Activated B cell treated with CpG ODN at 0.5 μM for 24 hours (primary cell): ENCODE measurements at regions of chr17 and their contacts with region 1.

Region 1: DNA sequence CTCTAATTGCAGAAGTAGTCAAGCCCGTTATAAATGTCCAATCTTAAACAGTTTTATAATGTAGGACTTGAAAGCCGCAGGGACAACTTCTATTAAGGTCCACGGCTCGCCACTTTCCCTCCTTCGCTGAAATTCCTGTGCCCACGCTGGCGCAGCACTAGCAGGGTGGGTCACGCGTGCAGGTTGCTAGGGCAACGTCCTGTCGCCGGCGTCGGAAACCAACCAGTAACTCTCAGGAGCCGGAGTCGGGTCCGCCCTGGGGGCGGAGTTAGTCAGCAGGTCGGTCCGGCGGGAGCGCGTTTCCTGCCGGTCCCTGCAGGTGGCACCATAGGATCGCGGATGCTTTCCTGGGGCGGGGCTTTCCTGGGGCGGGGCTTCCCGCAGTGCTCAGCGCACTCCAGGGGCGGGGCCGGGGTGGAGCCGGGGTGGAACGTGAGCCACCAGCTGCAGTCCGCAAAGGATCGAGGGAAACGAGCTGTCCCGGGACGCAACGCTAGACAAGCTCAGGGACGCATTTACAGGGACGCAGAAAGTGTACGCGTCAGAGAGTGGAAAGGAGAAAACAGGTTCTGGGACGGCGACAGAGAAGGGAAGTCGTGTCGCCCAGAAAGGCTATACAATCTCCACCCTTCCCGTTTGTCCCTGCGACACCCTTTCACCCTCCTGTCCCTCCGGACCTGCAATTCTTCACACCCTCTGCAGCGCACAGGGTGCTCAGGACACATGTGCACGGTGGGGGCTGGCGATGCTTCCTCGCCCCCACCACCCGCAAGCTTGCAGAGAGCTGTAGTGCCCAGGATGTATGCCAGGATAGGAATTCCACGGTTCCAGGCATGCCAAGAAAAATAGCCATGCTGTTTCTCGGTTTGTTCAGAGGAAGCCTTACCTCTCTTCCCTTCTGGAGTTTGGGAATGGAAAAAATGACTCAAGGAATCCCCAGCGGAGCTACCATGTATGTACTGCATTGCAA is 12.4 kb downstream of the COPZ2 start:
- DNase-seq: peak; percentile 91
- ATAC-seq: peak; percentile 89
- H3K4me3 Mint-ChIP-seq: peak overlapping the region; percentile 89
- H3K27ac Mint-ChIP-seq: peak overlapping the region; percentile 91
- H3K4me1 Mint-ChIP-seq: peaks cover 35% of the 10 kb centered on the region
- H3K27me3 Mint-ChIP-seq: peaks cover 9% of the 10 kb centered on the region
- CTCF ChIP-seq: no peak

Region 2: GRCh38 chr17:47895856-47896671 is 129.2 kb before region 1 on chr17 and contains the start of gene SP2:
- CTCF ChIA-PET with region 1: no interaction called
- POLR2A ChIA-PET with region 1: no interaction called
- intact Hi-C with region 1: loop called (anchors 1 kb)
- DNase-seq: peak; percentile 97
- ATAC-seq: peak; percentile 88
- H3K4me3 Mint-ChIP-seq: peak within 1 kb of the TSS; percentile 98
- H3K27ac Mint-ChIP-seq: peak within 1 kb of the TSS; percentile 99
- H3K4me1 Mint-ChIP-seq: peaks cover 44% of the 10 kb centered on the region
- H3K27me3 Mint-ChIP-seq: no peaks in the 10 kb centered on the region
- CTCF ChIP-seq: no peak
- total RNA-seq, gene SP2: 26.5 and 28.5 TPM in 2 replicates

Region 3: DNA sequence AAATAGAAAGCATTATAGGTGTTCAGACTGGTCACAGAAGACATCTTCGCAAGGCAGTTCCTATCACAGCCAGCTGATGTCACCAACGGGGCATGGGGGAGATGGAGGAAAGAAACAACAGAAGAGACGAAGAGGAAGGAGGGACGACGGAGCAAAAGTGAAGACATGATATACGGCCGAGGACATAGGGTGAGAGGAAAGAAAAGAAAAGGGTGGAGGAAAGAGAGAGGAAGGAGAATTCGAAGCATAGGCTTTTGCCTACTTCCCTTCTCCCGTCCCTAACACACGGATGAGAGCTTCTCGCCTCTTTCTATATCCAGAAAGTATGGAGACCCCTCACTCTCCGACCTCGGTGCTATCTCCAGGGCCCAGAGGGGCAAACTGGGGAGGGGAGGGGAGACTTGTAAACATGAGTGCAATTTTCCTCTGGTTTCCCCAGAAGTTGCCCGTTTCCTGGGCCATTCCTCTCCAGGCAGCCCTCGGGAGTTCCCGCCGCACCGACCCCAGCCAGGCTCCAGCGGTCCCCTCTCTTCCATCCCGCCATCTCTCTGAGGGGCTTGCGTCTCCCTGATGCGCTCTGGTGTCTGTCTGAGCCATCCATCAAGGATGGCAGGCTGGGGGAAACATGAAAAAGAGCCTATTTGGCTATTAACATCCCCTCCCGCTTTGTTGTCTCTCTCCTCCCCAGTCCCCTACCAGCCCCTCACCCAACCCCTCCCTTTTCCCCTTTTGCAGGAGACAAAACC is 13.6 kb before region 1 on chr17:
- CTCF ChIA-PET with region 1: interaction called, 10 read pairs
- POLR2A ChIA-PET with region 1: interaction called, 3 read pairs
- intact Hi-C with region 1: loop called (anchors 1 kb)
- DNase-seq: no peak
- ATAC-seq: peak; percentile 69
- H3K4me3 Mint-ChIP-seq: peak overlapping the region; percentile 78
- H3K27ac Mint-ChIP-seq: no peak overlapping the region
- H3K4me1 Mint-ChIP-seq: peaks cover 15% of the 10 kb centered on the region
- H3K27me3 Mint-ChIP-seq: peaks cover 16% of the 10 kb centered on the region
- CTCF ChIP-seq: no peak

Region 4: DNA sequence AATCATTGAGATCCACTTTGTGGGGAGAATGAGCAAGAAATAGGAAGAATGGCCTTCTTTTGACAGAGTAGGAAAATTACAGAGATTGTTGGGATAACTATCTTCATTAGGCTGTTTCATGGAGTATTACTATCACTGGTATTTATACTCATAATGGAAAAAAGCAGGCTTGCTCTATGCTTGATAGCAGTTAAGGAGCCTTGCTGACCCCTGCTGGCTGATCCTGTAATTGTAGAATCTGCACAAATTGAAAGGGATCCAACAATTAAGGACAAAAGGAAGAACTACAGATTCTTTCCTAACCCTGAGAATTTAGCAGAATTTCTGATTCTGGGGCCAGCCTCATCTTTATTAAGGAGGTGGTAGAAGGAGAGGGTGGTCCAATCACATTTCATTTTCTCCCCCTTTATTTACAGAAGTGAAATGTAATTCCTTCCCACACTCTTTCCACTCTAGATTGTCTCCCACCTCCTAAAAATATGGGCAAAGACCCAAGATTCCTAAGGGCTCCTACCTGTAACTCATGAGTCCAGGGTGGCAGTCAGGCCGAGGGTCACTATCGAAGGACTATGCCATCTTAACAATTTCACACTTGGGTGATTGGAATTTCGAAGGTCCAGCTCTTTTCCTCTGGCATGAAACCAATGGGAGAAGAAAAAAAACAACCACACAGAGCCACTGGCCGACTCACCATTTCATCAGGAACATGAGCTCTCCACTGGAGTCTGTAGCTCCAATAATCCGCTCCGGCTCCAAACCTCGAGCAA is 49.3 kb after region 1 on chr17:
- CTCF ChIA-PET with region 1: interaction called, 148 read pairs
- POLR2A ChIA-PET with region 1: interaction called, 8 read pairs
- intact Hi-C with region 1: loop called (anchors 1 kb)
- DNase-seq: peak; percentile 36
- ATAC-seq: peak; percentile 93
- H3K4me3 Mint-ChIP-seq: no peak overlapping the region
- H3K27ac Mint-ChIP-seq: no peak overlapping the region
- H3K4me1 Mint-ChIP-seq: no peaks in the 10 kb centered on the region
- H3K27me3 Mint-ChIP-seq: no peaks in the 10 kb centered on the region
- CTCF ChIP-seq: no peak

Region 5: GRCh38 chr17:48307814-48308411 is 282.7 kb after region 1 on chr17:
- CTCF ChIA-PET with region 1: interaction called, 3 read pairs
- POLR2A ChIA-PET with region 1: no interaction called
- intact Hi-C with region 1: loop called (anchors 5 kb)
- DNase-seq: peak; percentile 20
- ATAC-seq: peak; percentile 86
- H3K4me3 Mint-ChIP-seq: no peak overlapping the region
- H3K27ac Mint-ChIP-seq: no peak overlapping the region
- H3K4me1 Mint-ChIP-seq: peaks cover 6% of the 10 kb centered on the region
- H3K27me3 Mint-ChIP-seq: no peaks in the 10 kb centered on the region
- CTCF ChIP-seq: peak; percentile 70

Region 6: GRCh38 chr17:48593840-48594537 is 568.8 kb after region 1 on chr17:
- CTCF ChIA-PET with region 1: interaction called, 3 read pairs
- POLR2A ChIA-PET with region 1: no interaction called
- intact Hi-C with region 1: loop called (anchors 1 kb)
- DNase-seq: peak; percentile 85
- ATAC-seq: peak; percentile 66
- H3K4me3 Mint-ChIP-seq: peak overlapping the region; percentile 71
- H3K27ac Mint-ChIP-seq: no peak overlapping the region
- H3K4me1 Mint-ChIP-seq: peaks cover 53% of the 10 kb centered on the region
- H3K27me3 Mint-ChIP-seq: peaks cover 73% of the 10 kb centered on the region
- CTCF ChIP-seq: peak; percentile 50

Region 7: DNA sequence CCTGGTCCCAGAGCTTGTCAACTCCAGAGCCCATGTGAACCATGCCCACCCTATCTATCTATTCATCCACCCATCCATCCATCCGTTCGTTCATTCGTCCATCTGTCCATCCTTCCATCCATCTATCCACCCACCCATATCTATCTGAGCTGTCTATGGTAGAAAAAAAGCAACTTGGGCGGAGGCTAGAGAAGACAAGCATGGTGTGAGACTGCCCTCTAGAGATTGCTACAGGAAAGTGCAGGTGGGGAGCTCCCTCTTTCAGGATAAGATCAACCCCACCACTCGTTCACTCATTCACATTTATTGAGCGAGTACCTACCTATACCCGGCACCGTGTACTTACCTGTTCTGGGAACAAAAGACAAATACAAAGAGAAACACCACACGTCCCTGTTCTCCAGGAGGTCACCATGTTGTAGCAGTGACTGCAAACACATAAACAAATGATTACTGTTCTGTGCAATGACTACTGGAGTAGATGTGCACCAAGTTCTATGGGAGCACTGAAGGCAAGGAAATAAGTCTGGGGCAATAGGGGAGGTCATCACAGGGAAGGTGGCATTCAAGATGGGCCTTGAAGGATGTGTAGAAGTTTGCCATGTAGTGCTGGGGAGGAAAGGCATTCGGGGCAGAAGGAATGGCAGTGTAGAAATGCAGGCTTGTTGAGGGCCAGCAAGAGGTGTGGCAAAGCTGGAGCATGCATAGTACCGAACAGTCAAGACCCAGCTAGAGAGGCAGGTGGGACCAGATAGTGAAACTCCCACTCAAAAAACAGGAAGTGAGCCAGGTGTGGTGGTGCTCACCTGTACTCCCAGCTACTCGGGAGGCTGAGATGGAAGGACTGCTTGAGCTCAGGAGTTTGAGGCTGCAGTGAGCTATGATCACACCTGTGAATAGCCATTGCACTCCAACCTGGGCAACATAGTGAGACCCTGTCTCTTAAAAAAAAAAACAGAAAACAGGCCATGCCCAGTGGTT is 854.0 kb after region 1 on chr17:
- CTCF ChIA-PET with region 1: no interaction called
- POLR2A ChIA-PET with region 1: no interaction called
- intact Hi-C with region 1: loop called (anchors 2 kb)
- DNase-seq: no peak
- ATAC-seq: peak; percentile 96
- H3K4me3 Mint-ChIP-seq: no peak overlapping the region
- H3K27ac Mint-ChIP-seq: no peak overlapping the region
- H3K4me1 Mint-ChIP-seq: peaks cover 2% of the 10 kb centered on the region
- H3K27me3 Mint-ChIP-seq: no peaks in the 10 kb centered on the region
- CTCF ChIP-seq: peak; percentile 82